ENCODE measurements at regions of chr4 and their contacts with region 1.

Region 1: DNA sequence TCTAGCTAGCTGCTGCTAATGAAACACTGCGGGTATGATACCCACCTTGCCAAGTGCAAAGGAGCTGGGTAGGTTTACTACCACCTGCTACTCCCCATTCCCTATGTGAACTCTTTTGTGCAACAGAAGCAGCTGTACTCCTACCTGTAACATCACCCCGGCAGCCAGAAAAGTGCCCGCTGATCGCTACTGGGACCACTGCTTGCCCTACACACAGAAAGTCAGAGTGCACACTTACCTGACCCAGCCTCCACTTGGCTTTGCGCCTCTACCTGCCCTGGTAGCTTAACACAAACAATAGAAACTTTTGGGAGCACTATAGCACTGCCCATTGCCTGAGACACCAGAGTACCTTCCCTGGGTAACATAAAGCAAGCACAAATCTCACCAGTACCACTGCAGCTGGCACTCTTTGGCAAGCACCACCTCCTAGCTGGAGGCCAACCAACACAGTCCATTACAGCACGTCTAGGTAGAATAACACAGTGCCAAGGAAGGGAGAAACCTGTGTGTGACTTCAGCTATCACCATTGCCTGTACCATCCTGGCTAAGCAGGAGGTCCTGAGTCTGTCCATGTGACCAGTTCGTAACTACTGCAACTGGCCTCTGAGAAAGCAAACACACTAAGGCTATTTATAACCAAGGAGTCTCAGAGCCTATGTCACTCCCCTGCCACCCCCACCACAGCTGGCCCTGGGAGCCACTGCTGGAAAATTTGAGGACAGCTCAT is 80.1 kb downstream of the CENPC start:
- DNase-seq: no peak
- ATAC-seq: no peak
- H3K4me3 ChIP-seq: no peak overlapping the region
- H3K4me3 Mint-ChIP-seq: no peak overlapping the region
- H3K27ac ChIP-seq: no peak overlapping the region
- H3K27ac Mint-ChIP-seq: no peak overlapping the region
- H3K4me1 ChIP-seq: no peaks in the 10 kb centered on the region
- H3K4me1 Mint-ChIP-seq: peaks cover 0 to 5% (median 0%) of the 10 kb centered on the region in 7 donors
- H3K27me3 ChIP-seq: no peaks in the 10 kb centered on the region
- H3K27me3 Mint-ChIP-seq: no peaks in the 10 kb centered on the region

Region 2: GRCh38 chr4:67512501-67512900 is 47.3 kb after region 1 on chr4:
- CTCF ChIA-PET with region 1: no interaction called
- POLR2A ChIA-PET with region 1: no interaction called
- intact Hi-C with region 1: loop called in 1 of 2 experiments (anchors 5 kb)
- DNase-seq: no peak
- ATAC-seq: no peak
- H3K4me3 ChIP-seq: no peak overlapping the region
- H3K4me3 Mint-ChIP-seq: peak overlapping the region in 1 of 10 donors; percentile 33
- H3K27ac ChIP-seq: no peak overlapping the region
- H3K27ac Mint-ChIP-seq: peak overlapping the region in 5 of 9 donors; percentile 15 to 63 (median 40)
- H3K4me1 ChIP-seq: peaks cover 0 to 8% of the 10 kb centered on the region in 2 donors
- H3K4me1 Mint-ChIP-seq: peaks cover 18 to 58% (median 34%) of the 10 kb centered on the region in 7 donors
- H3K27me3 ChIP-seq: no peaks in the 10 kb centered on the region
- H3K27me3 Mint-ChIP-seq: no peaks in the 10 kb centered on the region

Region 3: DNA sequence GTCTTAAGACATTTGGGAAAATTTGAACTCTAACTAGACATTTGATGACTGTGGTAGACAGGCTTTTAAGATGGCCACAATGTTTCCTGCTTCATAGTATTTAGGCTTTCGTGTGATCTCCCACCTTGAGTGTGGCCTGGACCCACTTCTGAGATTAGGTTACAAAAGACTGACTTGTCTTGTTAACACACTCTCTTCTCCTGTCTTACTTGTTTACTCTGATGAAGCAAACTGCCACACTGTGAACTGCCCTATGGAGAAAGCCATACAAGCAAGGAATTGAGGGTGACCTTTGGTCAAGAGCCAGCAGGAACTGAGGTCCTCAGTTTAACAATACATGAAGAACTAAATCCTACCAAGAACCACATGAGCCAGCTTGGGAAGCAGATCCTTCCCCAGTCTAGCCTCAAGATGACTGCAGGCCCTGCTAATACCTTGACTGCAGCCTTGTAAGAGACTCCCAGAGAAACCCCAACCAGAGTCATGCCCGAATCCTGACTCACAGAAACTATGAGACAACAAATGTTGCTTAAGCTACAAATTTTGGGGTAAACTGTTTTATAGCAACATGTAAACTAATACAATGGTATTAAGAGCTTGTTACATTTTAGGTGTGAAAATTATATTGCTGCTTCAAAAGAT is 215.5 kb after region 1 on chr4:
- CTCF ChIA-PET with region 1: no interaction called
- POLR2A ChIA-PET with region 1: no interaction called
- intact Hi-C with region 1: no loop called
- DNase-seq: no peak
- ATAC-seq: no peak
- H3K4me3 ChIP-seq: no peak overlapping the region
- H3K4me3 Mint-ChIP-seq: no peak overlapping the region
- H3K27ac ChIP-seq: no peak overlapping the region
- H3K27ac Mint-ChIP-seq: peak overlapping the region in 2 of 9 donors; percentile 6 to 65
- H3K4me1 ChIP-seq: no peaks in the 10 kb centered on the region
- H3K4me1 Mint-ChIP-seq: peaks cover 0 to 31% (median 13%) of the 10 kb centered on the region in 7 donors
- H3K27me3 ChIP-seq: no peaks in the 10 kb centered on the region
- H3K27me3 Mint-ChIP-seq: no peaks in the 10 kb centered on the region